Posterior vena cava (tissue), 2 donors: ENCODE measurements at regions of chr5 and their contacts with region 1.

Region 1: GRCh38 chr5:60382716-60383115 is 317.2 kb downstream of the DEPDC1B start:
- DNase-seq: no peak

Region 2: GRCh38 chr5:60540856-60541805 is 158.4 kb after region 1 on chr5:
- intact Hi-C with region 1: loop called in 1 of 2 experiments (anchors 10 kb)
- DNase-seq: no peak